Natural killer cell (primary cell): ENCODE measurements at regions of chr15 and their contacts with region 1.

Region 1: DNA sequence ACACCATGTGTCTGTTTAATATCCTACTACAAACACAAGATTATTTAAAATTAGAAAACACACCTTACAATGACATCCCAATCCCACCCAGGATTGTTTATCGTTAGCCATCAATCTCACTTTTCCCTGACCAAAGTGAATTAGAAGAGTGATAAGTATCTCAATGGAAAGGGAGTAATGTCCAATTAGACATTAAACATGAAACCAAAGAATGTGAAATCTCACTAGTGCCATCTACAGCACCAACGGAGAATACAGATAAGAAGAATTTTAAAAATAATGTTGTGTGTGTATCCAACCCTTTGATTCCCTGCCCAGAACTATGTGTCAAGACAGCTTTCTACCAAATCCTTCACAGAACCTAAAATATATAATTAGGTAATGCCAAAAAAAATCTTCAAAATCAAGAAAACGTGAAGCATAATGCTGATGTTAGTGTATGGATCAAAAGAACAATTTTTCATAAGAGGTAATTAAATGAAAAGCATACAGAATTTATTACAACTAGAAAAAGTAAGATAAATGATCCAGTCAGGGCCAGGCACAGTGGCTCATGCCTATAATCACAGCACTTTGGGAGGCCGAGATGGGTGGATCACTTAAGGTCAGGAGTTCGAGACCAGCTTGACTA is 64.2 kb downstream of the SCAPER start:
- DNase-seq: peak in 1 of 2 donors; percentile 22
- ATAC-seq: no peak
- H3K4me3 ChIP-seq: no peak overlapping the region
- H3K4me3 Mint-ChIP-seq: no peak overlapping the region
- H3K27ac ChIP-seq: no peak overlapping the region
- H3K27ac Mint-ChIP-seq: no peak overlapping the region
- H3K4me1 ChIP-seq: no peaks in the 10 kb centered on the region
- H3K4me1 Mint-ChIP-seq: peaks cover 32 to 34% of the 10 kb centered on the region in 2 donors
- H3K27me3 ChIP-seq: no peaks in the 10 kb centered on the region
- H3K27me3 Mint-ChIP-seq: no peaks in the 10 kb centered on the region
- CTCF ChIP-seq: peak; percentile 32

Region 2: DNA sequence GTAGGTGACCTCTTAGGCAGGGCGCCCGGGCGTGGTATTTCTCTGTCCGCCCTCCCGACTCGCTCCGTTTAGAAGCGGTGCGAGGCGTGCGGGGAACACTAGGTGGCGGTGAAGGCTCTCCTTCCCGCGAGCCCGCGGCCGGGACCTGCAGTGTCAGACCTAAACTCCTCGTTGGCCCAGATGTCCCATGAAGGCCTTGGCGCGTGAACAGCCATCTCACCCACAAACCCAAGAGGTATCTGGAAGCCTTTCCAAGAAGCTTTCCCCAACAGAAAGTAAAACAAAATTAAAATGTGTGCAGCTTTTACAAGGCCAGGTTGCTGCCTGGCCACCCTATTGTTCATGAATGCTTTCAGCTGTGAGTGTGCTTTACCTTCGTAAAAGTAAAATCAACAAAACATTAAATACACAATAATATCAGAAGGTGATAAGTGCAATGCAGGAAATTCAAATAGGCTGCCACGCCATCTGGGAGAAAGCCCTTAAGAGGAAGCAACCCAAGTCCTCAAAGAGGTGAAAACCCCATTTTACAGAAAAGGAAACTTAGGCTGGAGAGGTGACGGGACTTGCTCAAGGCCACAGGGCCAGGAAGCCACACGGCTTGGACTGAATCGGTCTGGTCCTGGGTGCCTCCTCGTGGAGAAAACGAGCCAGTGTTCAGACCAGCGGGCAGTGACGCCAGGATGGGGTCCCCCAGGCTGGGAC is 650.0 kb before region 1 on chr15:
- intact Hi-C with region 1: loop called (anchors 2 kb)
- DNase-seq: peak; percentile 61 to 74
- ATAC-seq: peak; percentile 79 to 97 (median 96)
- H3K4me3 ChIP-seq: no peak overlapping the region
- H3K4me3 Mint-ChIP-seq: peak overlapping the region; percentile 13
- H3K27ac ChIP-seq: no peak overlapping the region
- H3K27ac Mint-ChIP-seq: no peak overlapping the region
- H3K4me1 ChIP-seq: peaks cover 13% of the 10 kb centered on the region
- H3K4me1 Mint-ChIP-seq: peaks cover 10 to 14% of the 10 kb centered on the region in 2 donors
- H3K27me3 ChIP-seq: peaks cover 3% of the 10 kb centered on the region
- H3K27me3 Mint-ChIP-seq: peaks cover 22 to 24% of the 10 kb centered on the region in 2 donors
- CTCF ChIP-seq: peak; percentile 68

Region 3: DNA sequence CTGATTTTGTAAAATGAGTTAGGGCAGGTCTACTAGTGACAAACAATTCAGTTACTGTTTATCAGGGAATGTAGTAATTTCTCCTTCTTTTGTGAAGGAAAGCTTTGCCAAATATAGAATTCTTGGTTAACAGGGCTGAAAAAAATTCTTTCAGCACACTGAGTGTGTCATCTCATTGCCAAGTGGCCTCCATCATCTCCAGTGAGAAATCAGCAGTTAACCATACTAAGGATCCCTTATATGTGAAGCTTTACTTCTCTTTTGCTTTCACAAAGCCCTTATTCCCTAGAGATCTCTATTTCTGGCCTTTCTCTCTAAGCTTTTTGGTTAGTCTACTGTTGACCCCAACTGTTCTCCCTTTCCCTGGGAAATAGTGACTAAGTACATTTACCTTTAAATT is 204.9 kb before region 1 on chr15:
- intact Hi-C with region 1: no loop called
- DNase-seq: no peak
- ATAC-seq: no peak
- H3K4me3 ChIP-seq: no peak overlapping the region
- H3K4me3 Mint-ChIP-seq: no peak overlapping the region
- H3K27ac ChIP-seq: no peak overlapping the region
- H3K27ac Mint-ChIP-seq: no peak overlapping the region
- H3K4me1 ChIP-seq: no peaks in the 10 kb centered on the region
- H3K4me1 Mint-ChIP-seq: no peaks in the 10 kb centered on the region
- H3K27me3 ChIP-seq: no peaks in the 10 kb centered on the region
- H3K27me3 Mint-ChIP-seq: no peaks in the 10 kb centered on the region
- CTCF ChIP-seq: no peak

Region 4: GRCh38 chr15:76912141-76912834 is 71.3 kb after region 1 on chr15:
- intact Hi-C with region 1: no loop called
- DNase-seq: no peak
- ATAC-seq: no peak
- H3K4me3 ChIP-seq: no peak overlapping the region
- H3K4me3 Mint-ChIP-seq: no peak overlapping the region
- H3K27ac ChIP-seq: no peak overlapping the region
- H3K27ac Mint-ChIP-seq: no peak overlapping the region
- H3K4me1 ChIP-seq: no peaks in the 10 kb centered on the region
- H3K4me1 Mint-ChIP-seq: no peaks in the 10 kb centered on the region
- H3K27me3 ChIP-seq: no peaks in the 10 kb centered on the region
- H3K27me3 Mint-ChIP-seq: peaks cover under 1 to 4% of the 10 kb centered on the region in 2 donors
- CTCF ChIP-seq: no peak